ENCODE measurements at regions of chr19 and their contacts with region 1.

Region 1: GRCh38 chr19:45161738-45162607 is 1.2 kb upstream of the NKPD1 start:
- DNase-seq: peak; percentile 50
- H3K4me3 ChIP-seq: no peak overlapping the region
- H3K27ac ChIP-seq: no peak overlapping the region
- H3K4me1 ChIP-seq: peaks cover 6% of the 10 kb centered on the region
- H3K27me3 ChIP-seq: no peaks in the 10 kb centered on the region
- CTCF ChIP-seq: peak; percentile 61 to 90
- POLR2A ChIP-seq: no peak

Region 2: DNA sequence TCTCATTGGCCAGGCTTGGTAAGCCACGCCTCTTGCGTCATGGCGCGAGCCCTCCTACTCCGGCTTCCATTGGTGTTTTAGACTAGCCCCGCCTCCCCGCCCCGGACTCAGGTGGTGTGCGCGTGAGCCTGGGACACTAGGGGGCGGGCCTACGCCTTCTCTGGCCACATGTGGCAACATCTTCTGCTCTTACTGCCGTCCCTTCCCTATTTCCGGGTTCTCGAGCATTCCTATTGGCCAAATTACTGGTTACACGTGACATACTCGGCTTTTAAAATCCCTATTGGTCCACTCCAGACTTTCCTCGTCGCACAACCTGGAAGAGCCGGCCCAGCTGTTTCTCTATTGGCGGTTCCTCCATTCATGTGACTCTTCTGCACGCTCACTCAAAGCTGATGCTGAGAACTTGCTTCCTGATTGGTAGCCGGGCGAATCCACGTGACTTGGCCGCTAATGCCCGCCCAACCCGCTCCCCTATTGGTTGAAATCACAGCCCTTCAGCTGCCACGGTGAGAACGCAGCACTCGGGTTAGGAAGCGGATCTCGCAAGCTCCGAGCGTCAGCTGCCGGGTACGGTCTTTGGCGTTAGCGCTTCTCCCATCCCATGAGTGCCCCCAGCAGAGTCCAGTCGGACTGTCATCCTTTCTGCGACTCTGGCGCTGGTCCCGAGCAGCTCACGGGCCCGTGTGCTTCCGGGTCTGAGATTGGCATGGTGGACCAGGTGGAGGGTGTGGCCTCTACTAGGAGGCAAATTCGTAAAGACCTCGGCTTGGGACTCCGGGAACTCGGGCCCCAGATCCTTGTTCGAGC is 16.5 kb after region 1 on chr19 and contains the start of gene BLOC1S3:
- CTCF ChIA-PET with region 1: interaction called, 12 read pairs
- POLR2A ChIA-PET with region 1: interaction called, 3 read pairs
- dilution Hi-C with region 1: no loop called
- intact Hi-C with region 1: no loop called
- DNase-seq: peak; percentile 100
- H3K4me3 ChIP-seq: peak within 1 kb of the TSS; percentile 68 to 91 (median 85)
- H3K27ac ChIP-seq: peak within 1 kb of the TSS; percentile 80
- H3K4me1 ChIP-seq: peaks cover 13% of the 10 kb centered on the region
- H3K27me3 ChIP-seq: no peaks in the 10 kb centered on the region
- CTCF ChIP-seq: peak; percentile 22 to 53
- POLR2A ChIP-seq: peak; percentile 58
- total RNA-seq, gene BLOC1S3: 11.7 and 17.4 TPM in 2 replicates

Region 3: DNA sequence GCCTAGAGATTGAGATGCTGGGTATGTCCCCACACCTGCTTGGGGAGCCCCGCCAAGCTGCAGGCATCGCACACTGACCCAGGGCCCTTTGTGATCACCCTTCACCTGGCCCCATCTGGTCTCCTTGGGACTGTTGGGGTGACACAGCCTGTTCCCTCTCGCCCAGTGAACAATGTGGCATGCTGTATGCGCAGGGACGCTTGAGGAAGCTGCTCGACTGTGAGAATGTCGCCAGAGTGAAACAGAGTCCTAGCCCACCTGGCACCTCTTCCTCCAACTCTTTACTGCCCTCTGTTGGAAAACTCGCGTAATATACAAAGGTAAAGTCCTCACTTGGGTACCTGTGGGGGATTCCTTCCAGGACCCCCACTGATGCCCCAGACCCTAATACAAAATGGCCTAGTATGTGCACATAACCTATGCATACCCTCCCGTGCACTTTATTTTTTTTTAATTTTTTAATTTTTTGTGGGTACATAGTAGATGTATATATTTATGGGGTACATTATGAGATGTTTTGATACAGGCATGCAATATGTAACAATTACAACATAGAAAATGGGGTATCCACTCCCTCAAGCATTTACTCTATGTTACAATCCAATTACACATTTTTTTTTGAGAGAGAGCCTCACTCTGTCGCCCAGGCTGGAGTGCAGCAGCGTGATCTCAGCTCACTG is 25.6 kb after region 1 on chr19:
- CTCF ChIA-PET with region 1: interaction called, 14 read pairs
- POLR2A ChIA-PET with region 1: no interaction called
- dilution Hi-C with region 1: no loop called
- intact Hi-C with region 1: loop called (anchors 1 kb)
- DNase-seq: no peak
- H3K4me3 ChIP-seq: no peak overlapping the region
- H3K27ac ChIP-seq: no peak overlapping the region
- H3K4me1 ChIP-seq: no peaks in the 10 kb centered on the region
- H3K27me3 ChIP-seq: no peaks in the 10 kb centered on the region
- CTCF ChIP-seq: peak; percentile 53 to 61
- POLR2A ChIP-seq: no peak